Tibial artery (tissue), 4 donors: ENCODE measurements at regions of chr15 and their contacts with region 1.

Region 1: GRCh38 chr15:100778831-100779288 is 100.8 kb upstream of the ALDH1A3 start:
- DNase-seq: peak; percentile 5 to 20
- H3K4me3 ChIP-seq: no peak overlapping the region
- H3K27ac ChIP-seq: no peak overlapping the region
- H3K4me1 ChIP-seq: no peaks in the 10 kb centered on the region
- H3K27me3 ChIP-seq: peaks cover 0 to 3% of the 10 kb centered on the region in 2 donors
- CTCF ChIP-seq: no peak

Region 2: GRCh38 chr15:100438570-100438969 is 340.3 kb before region 1 on chr15:
- intact Hi-C with region 1: no loop called
- DNase-seq: peak in 1 of 2 donors; percentile 55
- H3K4me3 ChIP-seq: no peak overlapping the region
- H3K27ac ChIP-seq: no peak overlapping the region
- H3K4me1 ChIP-seq: no peaks in the 10 kb centered on the region
- H3K27me3 ChIP-seq: no peaks in the 10 kb centered on the region
- CTCF ChIP-seq: no peak

Region 3: DNA sequence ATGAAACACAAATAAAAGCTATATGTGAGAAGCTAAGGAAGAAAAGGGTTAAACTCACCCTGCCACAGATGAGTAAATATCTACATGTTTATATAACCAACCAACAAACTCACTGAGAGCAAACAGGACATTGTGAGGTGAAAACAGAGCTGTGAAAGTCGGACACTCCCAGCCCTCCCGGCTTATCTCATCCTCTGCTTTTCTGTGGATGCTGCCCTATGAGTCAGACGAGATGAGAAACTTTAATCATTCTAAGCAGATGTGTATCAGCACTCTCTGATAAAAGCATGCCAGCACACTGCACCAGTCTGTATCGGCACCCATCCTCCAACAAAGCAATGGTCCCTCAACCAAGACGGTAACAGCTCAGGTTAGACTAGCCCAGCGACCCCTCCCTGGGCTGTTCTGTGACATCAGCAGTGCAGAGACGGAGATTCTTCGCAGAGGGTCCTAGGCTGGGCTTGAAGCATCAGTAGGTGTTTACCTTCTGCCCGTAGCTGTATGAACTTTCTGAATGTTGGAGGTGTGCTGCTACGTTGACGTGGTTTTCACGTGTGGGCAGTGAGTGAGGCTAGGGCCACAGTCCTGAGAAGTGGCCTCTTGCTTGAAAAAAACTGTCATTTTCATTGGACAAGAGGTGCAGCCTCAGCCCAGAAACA is 19.0 kb before region 1 on chr15:
- intact Hi-C with region 1: loop called (anchors 2 kb)
- DNase-seq: no peak
- H3K4me3 ChIP-seq: no peak overlapping the region
- H3K27ac ChIP-seq: no peak overlapping the region
- H3K4me1 ChIP-seq: no peaks in the 10 kb centered on the region
- H3K27me3 ChIP-seq: peaks cover 0 to 4% of the 10 kb centered on the region in 2 donors
- CTCF ChIP-seq: no peak

Region 4: GRCh38 chr15:101326462-101327135 is 547.7 kb after region 1 on chr15:
- intact Hi-C with region 1: no loop called
- DNase-seq: peak in 1 of 2 donors; percentile 37
- H3K4me3 ChIP-seq: no peak overlapping the region
- H3K27ac ChIP-seq: no peak overlapping the region
- H3K4me1 ChIP-seq: no peaks in the 10 kb centered on the region
- H3K27me3 ChIP-seq: peaks cover 0 to 6% of the 10 kb centered on the region in 2 donors
- CTCF ChIP-seq: no peak